Dendritic cell treated with granulocyte-macrophage colony-stimulating factor and Interleukin-4, amounts not matched to agents 40 ng/mL and 50 ng/mL, for 4 days (primary cell): ENCODE measurements at regions of chr12 and their contacts with region 1.

Region 1: GRCh38 chr12:100266835-100267618 is at the starts of genes DEPDC4 and SCYL2:
- H3K4me3 Mint-ChIP-seq: peak within 1 kb of the TSS; percentile 99
- H3K27ac Mint-ChIP-seq: peak within 1 kb of the TSS; percentile 96
- H3K4me1 Mint-ChIP-seq: peaks cover 25% of the 10 kb centered on the region
- H3K27me3 Mint-ChIP-seq: no peaks in the 10 kb centered on the region

Region 2: DNA sequence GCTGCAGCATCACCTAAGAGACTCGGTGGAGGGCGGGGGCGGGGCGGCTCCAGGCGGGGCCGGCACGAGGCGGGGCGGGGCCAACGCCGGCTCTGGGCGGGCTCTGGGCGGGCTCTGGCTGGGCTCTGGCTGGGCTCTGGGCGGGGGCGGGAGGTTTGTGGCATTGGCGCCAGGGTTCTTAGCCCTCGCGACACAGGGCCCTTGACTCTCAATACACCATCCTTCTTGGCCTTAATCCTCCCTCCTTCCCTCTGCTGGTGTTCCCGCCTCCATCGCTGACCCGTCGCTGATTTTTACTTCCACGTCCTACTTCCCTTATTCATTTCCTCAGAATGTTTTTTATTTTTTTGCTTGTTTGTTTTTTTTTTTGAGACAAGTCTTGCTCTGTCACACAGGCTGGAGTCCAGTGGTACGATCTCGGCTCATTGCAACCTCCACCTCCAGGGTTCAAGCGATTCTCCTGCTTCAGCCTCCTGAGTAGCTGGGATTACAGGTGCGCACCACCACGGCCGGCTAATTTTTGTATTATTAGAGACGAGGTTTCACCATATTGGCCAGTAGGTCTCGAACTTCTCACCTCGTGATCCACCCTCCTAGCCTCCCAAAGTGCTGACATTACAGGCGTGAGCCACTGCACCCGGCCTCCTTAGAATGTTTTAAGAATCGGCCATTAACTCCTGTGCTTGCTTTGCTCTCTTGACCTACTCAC is 124.0 kb before region 1 on chr12 and contains the start of gene BLTP3B:
- intact Hi-C with region 1: loop called (anchors 2 kb)
- H3K4me3 Mint-ChIP-seq: peak within 1 kb of the TSS; percentile 99
- H3K27ac Mint-ChIP-seq: peak within 1 kb of the TSS; percentile 98
- H3K4me1 Mint-ChIP-seq: peaks cover 37% of the 10 kb centered on the region
- H3K27me3 Mint-ChIP-seq: no peaks in the 10 kb centered on the region

Region 3: DNA sequence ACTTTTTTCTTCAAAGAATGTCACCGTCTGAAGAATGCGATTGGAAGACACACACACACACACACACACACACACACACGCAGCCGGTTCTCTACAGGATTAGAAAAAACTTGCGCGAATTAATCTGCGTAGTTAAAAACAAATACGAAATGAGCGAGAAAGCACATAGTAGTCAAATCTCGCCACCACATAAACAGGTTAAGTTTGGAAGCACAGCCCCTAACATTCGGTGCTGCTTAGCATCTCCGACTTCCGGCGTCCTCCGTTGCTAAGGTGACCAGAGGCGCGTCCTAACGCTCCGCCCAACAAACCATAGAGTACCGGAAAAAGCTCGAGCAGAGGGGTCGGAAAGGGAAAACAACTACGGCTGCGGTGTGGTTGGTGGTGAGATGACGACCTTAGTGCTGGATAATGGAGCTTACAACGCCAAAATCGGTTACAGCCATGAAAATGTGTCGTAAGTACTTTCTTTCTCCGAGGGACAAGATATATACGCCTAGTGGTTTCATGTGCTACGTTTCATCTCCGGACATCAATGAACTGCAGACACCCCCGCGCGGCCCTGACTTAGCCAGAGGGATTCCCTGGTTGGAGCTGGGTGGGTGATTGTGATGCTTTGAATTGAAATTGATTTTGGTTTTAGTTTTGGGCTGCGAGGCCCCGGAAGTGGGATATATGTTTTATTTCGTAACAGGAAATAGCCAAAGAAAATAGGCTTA is 66.4 kb before region 1 on chr12 and contains the start of gene ACTR6:
- intact Hi-C with region 1: loop called (anchors 2 kb)
- H3K4me3 Mint-ChIP-seq: peak within 1 kb of the TSS; percentile 90
- H3K27ac Mint-ChIP-seq: peak within 1 kb of the TSS; percentile 93
- H3K4me1 Mint-ChIP-seq: peaks cover 13% of the 10 kb centered on the region
- H3K27me3 Mint-ChIP-seq: peaks cover 11% of the 10 kb centered on the region

Region 4: DNA sequence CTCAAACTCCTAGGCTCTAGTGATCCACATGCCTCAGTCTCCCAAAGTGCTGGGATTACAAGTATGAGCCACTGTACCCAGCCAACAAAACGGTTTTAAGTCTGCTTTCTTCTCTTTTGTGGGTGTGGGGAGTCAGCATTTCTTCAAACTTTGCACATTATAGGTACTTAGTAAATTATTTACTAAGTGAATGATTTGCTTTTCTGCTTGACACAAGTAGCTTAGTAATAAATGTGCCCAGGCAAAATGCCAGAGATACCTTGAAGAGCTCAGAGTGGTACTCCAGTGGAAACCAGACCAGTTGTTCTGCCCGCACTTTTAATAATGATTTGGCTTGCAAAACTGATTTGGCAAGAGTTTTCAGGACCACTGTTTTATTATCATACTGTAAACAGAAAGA is 15.1 kb before region 1 on chr12:
- intact Hi-C with region 1: no loop called
- H3K4me3 Mint-ChIP-seq: no peak overlapping the region
- H3K27ac Mint-ChIP-seq: no peak overlapping the region
- H3K4me1 Mint-ChIP-seq: peaks cover 13% of the 10 kb centered on the region
- H3K27me3 Mint-ChIP-seq: no peaks in the 10 kb centered on the region

Region 5: DNA sequence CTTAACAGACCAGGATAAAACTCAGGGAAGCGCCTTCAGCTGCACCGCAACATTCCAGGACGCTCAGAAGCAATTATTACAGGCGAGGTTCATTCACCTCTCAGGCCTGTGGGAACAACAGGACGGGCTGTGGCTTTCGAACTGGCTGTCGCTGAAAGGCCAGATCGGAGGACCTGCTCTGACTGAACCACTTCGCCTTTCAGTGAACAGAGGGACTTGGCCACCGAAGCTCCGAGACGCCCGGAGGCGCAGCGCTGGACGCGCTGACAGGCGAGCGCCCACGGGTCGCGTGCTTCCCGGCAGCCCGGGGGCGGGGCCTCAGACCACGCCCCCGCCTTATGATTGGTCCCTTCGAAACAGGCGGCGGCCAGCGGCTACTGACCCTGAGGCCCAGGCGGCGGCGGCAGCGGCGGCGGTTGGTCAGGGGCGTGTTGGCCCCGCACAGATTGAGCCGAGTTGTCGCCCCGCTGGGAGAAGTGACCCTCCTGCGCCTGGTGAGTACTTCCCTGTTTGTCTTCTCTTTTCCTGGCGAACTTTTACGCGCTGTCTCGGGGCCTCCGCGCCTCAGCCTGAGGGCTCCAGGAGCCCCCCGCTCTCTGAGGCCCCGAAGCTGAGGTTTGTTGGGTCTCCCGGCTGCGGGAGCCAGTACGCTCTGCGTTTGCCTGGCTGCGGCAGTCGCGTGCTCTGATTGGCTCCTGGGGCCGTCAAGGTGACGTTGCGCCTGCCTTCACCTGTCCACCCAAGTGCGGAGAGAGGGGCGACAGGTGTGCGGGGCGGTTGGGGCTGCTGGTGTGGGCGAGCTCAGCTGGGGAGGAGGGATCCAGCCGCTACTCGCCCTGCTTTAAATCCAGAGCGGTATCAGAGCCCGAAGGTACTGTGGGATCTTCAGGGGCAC is 306.5 kb after region 1 on chr12 and contains the start of gene GAS2L3:
- intact Hi-C with region 1: loop called (anchors 5 kb)
- H3K4me3 Mint-ChIP-seq: peak within 1 kb of the TSS; percentile 95
- H3K27ac Mint-ChIP-seq: peak within 1 kb of the TSS; percentile 97
- H3K4me1 Mint-ChIP-seq: peaks cover 38% of the 10 kb centered on the region
- H3K27me3 Mint-ChIP-seq: no peaks in the 10 kb centered on the region